Lower leg skin (tissue), 4 donors: ENCODE measurements at regions of chr2 and their contacts with region 1.

Region 1: GRCh38 chr2:234135720-234136221 is 85.3 kb downstream of the SPP2 start:
- DNase-seq: peak; percentile 51 to 90
- H3K4me3 ChIP-seq: no peak overlapping the region
- CTCF ChIP-seq: peak in 1 of 3 donors; percentile 54
- POLR2A ChIP-seq: no peak

Region 2: DNA sequence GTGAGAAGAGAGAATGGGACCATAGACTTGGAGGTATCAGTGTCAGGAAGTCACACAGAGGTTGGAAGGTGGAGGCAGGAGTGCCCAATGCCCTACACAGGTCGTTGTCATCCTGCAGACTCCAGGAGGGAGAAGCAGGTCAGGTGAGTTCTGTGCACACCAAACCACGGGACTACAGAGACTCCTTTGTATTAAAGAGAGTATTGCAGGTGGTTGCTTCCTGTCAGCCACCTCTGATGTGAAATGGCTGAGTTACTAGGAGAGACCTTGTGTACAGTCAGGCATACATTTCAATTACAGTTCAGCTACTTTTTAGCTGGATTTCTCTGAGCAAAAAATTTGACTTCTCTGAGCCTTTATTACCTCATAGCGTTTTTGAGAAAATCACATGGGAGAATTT is 33.7 kb before region 1 on chr2:
- intact Hi-C with region 1: no loop called
- DNase-seq: no peak
- H3K4me3 ChIP-seq: no peak overlapping the region
- CTCF ChIP-seq: no peak
- POLR2A ChIP-seq: no peak

Region 3: GRCh38 chr2:234500394-234501006 is 364.7 kb after region 1 on chr2:
- intact Hi-C with region 1: loop called (anchors 5 kb)
- DNase-seq: peak in 1 of 2 donors; percentile 68
- H3K4me3 ChIP-seq: no peak overlapping the region
- CTCF ChIP-seq: no peak
- POLR2A ChIP-seq: no peak

Region 4: GRCh38 chr2:234544659-234545611 is 409.2 kb after region 1 on chr2:
- intact Hi-C with region 1: loop called (anchors 10 kb)
- DNase-seq: peak; percentile 26 to 95
- H3K4me3 ChIP-seq: no peak overlapping the region
- CTCF ChIP-seq: peak in 2 of 3 donors; percentile 71 to 83
- POLR2A ChIP-seq: no peak